Spleen (tissue), 13 donors: ENCODE measurements at regions of chr16 and their contacts with region 1.

Region 1: GRCh38 chr16:10256784-10257641 is 74.8 kb upstream of the GRIN2A start:
- DNase-seq: peak; percentile 81
- H3K4me3 ChIP-seq: peak overlapping the region in 1 of 8 donors; percentile 27
- H3K27ac ChIP-seq: peak overlapping the region in 1 of 8 donors; percentile 6
- H3K4me1 ChIP-seq: peaks cover 0 to 31% (median 8%) of the 10 kb centered on the region in 6 donors
- H3K27me3 ChIP-seq: peaks cover 0 to 11% (median 0%) of the 10 kb centered on the region in 7 donors
- CTCF ChIP-seq: peak; percentile 36 to 84 (median 81)
- POLR2A ChIP-seq: no peak

Region 2: GRCh38 chr16:10202650-10203049 is 54.4 kb before region 1 on chr16:
- intact Hi-C with region 1: no loop called
- DNase-seq: no peak
- H3K4me3 ChIP-seq: no peak overlapping the region
- H3K27ac ChIP-seq: no peak overlapping the region
- H3K4me1 ChIP-seq: no peaks in the 10 kb centered on the region
- H3K27me3 ChIP-seq: peaks cover 0 to 7% (median 0%) of the 10 kb centered on the region in 7 donors
- CTCF ChIP-seq: no peak
- POLR2A ChIP-seq: no peak

Region 3: GRCh38 chr16:10729104-10730048 is 472.4 kb after region 1 on chr16:
- intact Hi-C with region 1: loop called (anchors 5 kb)
- DNase-seq: no peak
- H3K4me3 ChIP-seq: no peak overlapping the region
- H3K27ac ChIP-seq: no peak overlapping the region
- H3K4me1 ChIP-seq: no peaks in the 10 kb centered on the region
- H3K27me3 ChIP-seq: no peaks in the 10 kb centered on the region
- CTCF ChIP-seq: no peak
- POLR2A ChIP-seq: no peak